CD8-positive, alpha-beta T cell (primary cell): ENCODE measurements at regions of chr5 and their contacts with region 1.

Region 1: DNA sequence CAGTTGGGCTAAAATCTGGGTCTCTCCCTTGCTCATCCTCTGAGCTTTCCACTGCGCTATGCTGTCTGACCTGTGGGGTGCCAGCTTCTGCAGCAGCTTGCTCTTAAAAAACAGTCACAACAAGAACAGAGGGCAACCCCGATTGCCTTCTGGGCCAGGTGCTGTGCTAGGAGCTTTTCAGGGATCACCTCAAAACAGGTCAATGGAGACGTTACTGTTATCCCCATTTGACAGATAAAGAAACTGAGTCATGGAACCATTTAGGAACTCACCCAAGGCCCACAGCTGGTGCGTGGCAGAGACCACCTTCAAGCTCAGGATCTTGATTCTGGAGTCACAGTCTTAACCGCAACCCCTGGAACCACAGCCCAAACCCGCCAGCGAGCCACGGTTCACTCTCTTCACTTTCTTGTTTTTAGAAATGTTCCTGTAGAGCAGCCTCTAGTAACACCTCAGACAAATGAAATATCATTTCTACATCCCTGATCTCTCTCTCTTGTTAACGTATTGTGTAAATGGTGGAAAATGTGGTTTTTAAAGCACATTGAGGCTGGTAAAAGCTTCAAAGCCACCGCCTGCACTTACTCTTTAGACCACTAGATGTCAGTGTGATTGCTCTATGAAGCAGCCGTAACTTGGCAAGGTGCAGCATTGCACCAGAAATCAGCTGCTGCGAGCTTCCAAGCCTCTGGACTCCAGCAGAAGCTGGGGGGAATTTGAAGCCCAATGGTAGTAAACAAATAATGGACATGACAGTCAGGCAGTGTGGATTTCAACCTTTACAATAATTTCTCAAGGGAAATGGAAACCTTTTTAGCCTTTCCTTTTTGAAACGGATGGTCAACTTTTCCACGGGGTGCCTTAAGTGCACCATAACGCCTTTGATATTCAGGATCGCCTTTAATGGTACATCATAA is 1.7 kb downstream of the FYB1 start:
- DNase-seq: peak; percentile 56 to 92 (median 81)
- ATAC-seq: peak; percentile 61
- H3K4me3 ChIP-seq: peak overlapping the region; percentile 41 to 59
- H3K4me3 Mint-ChIP-seq: peak overlapping the region; percentile 79
- H3K27ac ChIP-seq: peak overlapping the region; percentile 53 to 70
- H3K27ac Mint-ChIP-seq: peak overlapping the region; percentile 92
- H3K4me1 ChIP-seq: peaks cover 47% of the 10 kb centered on the region
- H3K4me1 Mint-ChIP-seq: peaks cover 74% of the 10 kb centered on the region
- H3K27me3 ChIP-seq: no peaks in the 10 kb centered on the region
- H3K27me3 Mint-ChIP-seq: no peaks in the 10 kb centered on the region
- CTCF ChIP-seq: peak; percentile 96

Region 2: GRCh38 chr5:38994324-38994927 is 223.2 kb before region 1 on chr5:
- CTCF ChIA-PET with region 1: no interaction called
- POLR2A ChIA-PET with region 1: no interaction called
- intact Hi-C with region 1: loop called in 1 of 2 experiments (anchors 10 kb)
- DNase-seq: peak in 5 of 9 experiments; percentile 15 to 76 (median 41)
- ATAC-seq: peak; percentile 74
- H3K4me3 ChIP-seq: no peak overlapping the region
- H3K4me3 Mint-ChIP-seq: no peak overlapping the region
- H3K27ac ChIP-seq: no peak overlapping the region
- H3K27ac Mint-ChIP-seq: no peak overlapping the region
- H3K4me1 ChIP-seq: no peaks in the 10 kb centered on the region
- H3K4me1 Mint-ChIP-seq: peaks cover 27% of the 10 kb centered on the region
- H3K27me3 ChIP-seq: no peaks in the 10 kb centered on the region
- H3K27me3 Mint-ChIP-seq: no peaks in the 10 kb centered on the region
- CTCF ChIP-seq: peak; percentile 39

Region 3: DNA sequence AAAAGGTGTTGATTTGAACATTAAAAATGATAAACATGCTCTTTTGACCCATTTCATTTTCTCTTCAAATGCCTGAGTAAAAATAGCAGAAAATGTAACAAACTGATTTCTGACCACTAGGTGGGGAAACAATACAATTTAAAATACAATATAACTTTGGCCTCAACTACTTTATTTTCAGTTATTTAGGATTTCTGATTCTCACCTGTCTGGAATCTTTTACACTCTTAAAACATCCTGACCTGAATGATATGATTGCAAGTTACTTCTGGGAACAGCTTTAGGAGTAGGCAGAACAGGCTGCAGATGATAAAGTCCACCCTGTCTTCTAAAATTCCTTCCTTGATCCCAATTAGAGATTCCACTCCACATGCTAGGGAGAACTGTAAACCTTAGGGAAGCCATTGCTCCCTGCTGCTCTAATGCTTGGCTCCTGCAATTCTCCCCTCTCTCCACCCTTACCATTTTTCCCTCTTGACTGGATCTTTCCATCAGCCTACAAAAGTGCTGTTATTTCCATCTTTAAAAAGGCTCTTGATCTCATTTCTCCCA is 68.6 kb before region 1 on chr5:
- CTCF ChIA-PET with region 1: interaction called, 18 read pairs
- POLR2A ChIA-PET with region 1: interaction called, 3 read pairs
- intact Hi-C with region 1: loop called (anchors 1 to 2 kb)
- DNase-seq: peak in 2 of 9 experiments; percentile 59 to 72
- ATAC-seq: peak; percentile 41
- H3K4me3 ChIP-seq: no peak overlapping the region
- H3K4me3 Mint-ChIP-seq: peak overlapping the region; percentile 13
- H3K27ac ChIP-seq: peak overlapping the region in 1 of 2 experiments; percentile 61
- H3K27ac Mint-ChIP-seq: peak overlapping the region; percentile 92
- H3K4me1 ChIP-seq: peaks cover 42% of the 10 kb centered on the region
- H3K4me1 Mint-ChIP-seq: peaks cover 76% of the 10 kb centered on the region
- H3K27me3 ChIP-seq: no peaks in the 10 kb centered on the region
- H3K27me3 Mint-ChIP-seq: no peaks in the 10 kb centered on the region
- CTCF ChIP-seq: peak; percentile 69

Region 4: GRCh38 chr5:39177631-39177964 is 40.0 kb before region 1 on chr5:
- CTCF ChIA-PET with region 1: interaction called, 58 read pairs
- POLR2A ChIA-PET with region 1: interaction called, 43 read pairs
- intact Hi-C with region 1: loop called (anchors 2 to 5 kb)
- DNase-seq: peak in 2 of 9 experiments; percentile 73 to 86
- ATAC-seq: peak; percentile 64
- H3K4me3 ChIP-seq: peak overlapping the region; percentile 20 to 36
- H3K4me3 Mint-ChIP-seq: peak overlapping the region; percentile 63
- H3K27ac ChIP-seq: peak overlapping the region; percentile 62 to 76
- H3K27ac Mint-ChIP-seq: peak overlapping the region; percentile 96
- H3K4me1 ChIP-seq: peaks cover 96% of the 10 kb centered on the region
- H3K4me1 Mint-ChIP-seq: peaks cover 96% of the 10 kb centered on the region
- H3K27me3 ChIP-seq: no peaks in the 10 kb centered on the region
- H3K27me3 Mint-ChIP-seq: no peaks in the 10 kb centered on the region
- CTCF ChIP-seq: no peak

Region 5: GRCh38 chr5:39202597-39203274 is 14.9 kb before region 1 on chr5:
- CTCF ChIA-PET with region 1: interaction called, 127 read pairs
- POLR2A ChIA-PET with region 1: interaction called, 71 read pairs
- intact Hi-C with region 1: loop called (anchors 1 to 2 kb)
- DNase-seq: peak in 4 of 9 experiments; percentile 49 to 77 (median 64)
- ATAC-seq: peak; percentile 58
- H3K4me3 ChIP-seq: peak overlapping the region; percentile 48 to 75
- H3K4me3 Mint-ChIP-seq: peak overlapping the region; percentile 93
- H3K27ac ChIP-seq: peak overlapping the region; percentile 70 to 88
- H3K27ac Mint-ChIP-seq: peak overlapping the region; percentile 96
- H3K4me1 ChIP-seq: peaks cover 48% of the 10 kb centered on the region
- H3K4me1 Mint-ChIP-seq: peaks cover 57% of the 10 kb centered on the region
- H3K27me3 ChIP-seq: no peaks in the 10 kb centered on the region
- H3K27me3 Mint-ChIP-seq: no peaks in the 10 kb centered on the region
- CTCF ChIP-seq: no peak

Region 6: GRCh38 chr5:39274398-39275085 is 56.9 kb after region 1 on chr5:
- CTCF ChIA-PET with region 1: interaction called, 212 read pairs
- POLR2A ChIA-PET with region 1: interaction called, 10 read pairs
- intact Hi-C with region 1: loop called in 1 of 2 experiments (anchors 2 kb)
- DNase-seq: peak in 2 of 9 experiments; percentile 55 to 77
- ATAC-seq: peak; percentile 64
- H3K4me3 ChIP-seq: peak overlapping the region; percentile 40 to 42
- H3K4me3 Mint-ChIP-seq: peak overlapping the region; percentile 86
- H3K27ac ChIP-seq: peak overlapping the region; percentile 54 to 87
- H3K27ac Mint-ChIP-seq: peak overlapping the region; percentile 98
- H3K4me1 ChIP-seq: peaks cover 41% of the 10 kb centered on the region
- H3K4me1 Mint-ChIP-seq: peaks cover 58% of the 10 kb centered on the region
- H3K27me3 ChIP-seq: no peaks in the 10 kb centered on the region
- H3K27me3 Mint-ChIP-seq: no peaks in the 10 kb centered on the region
- CTCF ChIP-seq: no peak

Region 7: DNA sequence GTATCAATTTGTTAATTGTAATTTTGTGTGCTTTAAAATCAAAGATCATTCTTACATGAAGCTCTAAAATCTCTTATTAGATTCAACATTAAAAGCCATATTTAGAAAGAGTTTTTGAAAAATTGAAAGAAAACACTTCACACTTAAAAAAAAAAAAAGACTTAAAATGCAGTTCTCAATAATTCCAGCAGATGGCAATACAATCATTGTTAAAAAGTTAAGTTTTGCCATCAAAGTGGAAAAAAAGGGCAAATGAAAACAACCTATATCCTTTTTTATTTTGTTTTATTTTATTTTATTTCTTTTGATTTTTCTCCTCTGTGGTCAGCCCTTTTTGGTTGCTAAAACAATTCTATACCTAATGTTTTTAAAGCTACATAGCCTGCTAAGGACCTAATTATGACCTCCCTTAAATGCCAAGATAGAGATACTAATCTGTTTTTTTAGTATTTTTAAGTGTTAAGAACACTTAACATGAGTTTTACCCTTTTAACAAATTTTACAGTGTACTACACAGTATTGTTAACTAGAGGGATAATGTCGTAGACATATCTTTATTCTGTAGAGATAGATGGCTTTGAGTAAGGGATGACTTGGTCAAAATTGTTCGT is 361.4 kb after region 1 on chr5:
- CTCF ChIA-PET with region 1: no interaction called
- POLR2A ChIA-PET with region 1: no interaction called
- intact Hi-C with region 1: no loop called
- DNase-seq: peak in 2 of 9 experiments; percentile 36 to 52
- ATAC-seq: no peak
- H3K4me3 ChIP-seq: no peak overlapping the region
- H3K4me3 Mint-ChIP-seq: no peak overlapping the region
- H3K27ac ChIP-seq: no peak overlapping the region
- H3K27ac Mint-ChIP-seq: no peak overlapping the region
- H3K4me1 ChIP-seq: peaks cover 4% of the 10 kb centered on the region
- H3K4me1 Mint-ChIP-seq: peaks cover 6% of the 10 kb centered on the region
- H3K27me3 ChIP-seq: no peaks in the 10 kb centered on the region
- H3K27me3 Mint-ChIP-seq: peaks cover 5% of the 10 kb centered on the region
- CTCF ChIP-seq: peak; percentile 98